ENCODE measurements at regions of chr12 and their contacts with region 1.

Region 1: DNA sequence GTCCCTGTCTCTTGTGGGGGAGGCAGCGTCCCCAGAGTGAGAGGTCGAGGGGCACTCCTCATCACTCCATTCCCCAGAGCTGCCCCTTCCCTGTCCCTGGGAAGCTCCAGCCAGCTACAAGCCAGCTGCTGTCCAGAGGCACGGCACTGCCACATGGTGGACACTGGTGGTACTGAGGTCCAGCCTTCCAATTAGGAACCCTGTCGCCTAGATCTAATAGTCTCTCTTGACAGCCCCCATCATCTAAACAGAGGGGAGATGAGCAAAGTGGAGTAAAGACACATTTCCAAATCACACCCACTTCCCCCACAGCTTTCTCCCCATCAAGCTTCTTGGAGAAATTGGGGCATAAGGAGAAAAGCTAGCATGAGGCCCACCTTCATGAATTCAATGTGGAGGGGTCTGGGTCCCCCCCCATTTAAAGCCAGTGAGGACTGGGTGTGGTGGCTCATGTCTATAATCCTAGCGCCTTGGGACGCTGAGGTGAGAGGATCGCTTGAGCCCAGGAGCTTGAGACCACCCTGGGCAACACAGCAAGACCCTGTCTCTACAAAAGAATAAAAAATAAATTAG is 2.1 kb upstream of the INHBE start:
- DNase-seq: peak; percentile 45
- ATAC-seq: peak; percentile 71
- H3K4me3 Mint-ChIP-seq: no peak overlapping the region
- H3K27ac Mint-ChIP-seq: no peak overlapping the region
- H3K4me1 Mint-ChIP-seq: peaks cover 12% of the 10 kb centered on the region
- H3K27me3 Mint-ChIP-seq: no peaks in the 10 kb centered on the region
- CTCF ChIP-seq: no peak

Region 2: GRCh38 chr12:57261428-57261865 is 191.6 kb before region 1 on chr12:
- CTCF ChIA-PET with region 1: interaction called, 67 read pairs
- POLR2A ChIA-PET with region 1: interaction called, 5 read pairs
- intact Hi-C with region 1: loop called (anchors 1 kb)
- DNase-seq: no peak
- ATAC-seq: no peak
- H3K4me3 Mint-ChIP-seq: no peak overlapping the region
- H3K27ac Mint-ChIP-seq: no peak overlapping the region
- H3K4me1 Mint-ChIP-seq: peaks cover 5% of the 10 kb centered on the region
- H3K27me3 Mint-ChIP-seq: no peaks in the 10 kb centered on the region
- CTCF ChIP-seq: no peak

Region 3: DNA sequence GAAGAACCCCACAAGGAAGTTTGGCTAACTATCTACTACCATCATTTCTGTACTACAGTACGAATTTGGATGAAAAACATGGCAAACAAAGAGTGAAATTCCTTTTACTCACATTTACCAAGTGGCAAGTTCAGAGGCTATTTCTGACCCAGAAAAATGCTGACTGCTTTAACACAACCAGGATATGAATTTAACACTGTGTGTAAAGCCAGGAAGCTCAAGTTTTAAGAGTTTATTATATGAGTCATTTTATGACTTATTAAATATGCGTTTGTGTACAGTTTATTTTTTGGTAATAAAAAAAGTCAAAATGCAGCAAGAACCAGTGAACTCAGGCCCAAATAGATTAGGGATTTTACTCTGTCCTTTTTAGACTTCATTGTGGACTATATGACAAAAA is 143.6 kb before region 1 on chr12:
- CTCF ChIA-PET with region 1: interaction called, 58 read pairs
- POLR2A ChIA-PET with region 1: no interaction called
- intact Hi-C with region 1: loop called (anchors 1 kb)
- DNase-seq: no peak
- ATAC-seq: no peak
- H3K4me3 Mint-ChIP-seq: no peak overlapping the region
- H3K27ac Mint-ChIP-seq: no peak overlapping the region
- H3K4me1 Mint-ChIP-seq: no peaks in the 10 kb centered on the region
- H3K27me3 Mint-ChIP-seq: no peaks in the 10 kb centered on the region
- CTCF ChIP-seq: no peak

Region 4: DNA sequence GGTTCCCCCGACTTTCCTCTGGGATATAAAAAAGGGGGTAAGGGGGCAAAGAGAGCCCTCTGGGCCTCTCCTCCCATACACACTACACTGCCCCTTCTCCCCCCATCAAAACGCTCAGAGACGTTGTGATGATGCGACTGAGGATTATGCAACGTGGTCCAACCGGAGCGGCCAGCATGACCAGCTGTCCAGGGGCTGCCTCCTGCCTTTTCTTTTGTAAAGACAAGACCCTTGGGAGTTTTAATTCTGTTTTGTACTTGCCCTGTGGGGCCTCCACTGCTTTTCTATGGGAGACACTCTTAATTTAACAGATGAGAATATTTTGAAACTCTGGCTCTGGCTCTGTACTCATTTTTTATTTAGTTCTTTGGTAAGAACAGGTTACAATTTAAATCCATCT is 76.8 kb after region 1 on chr12:
- CTCF ChIA-PET with region 1: no interaction called
- POLR2A ChIA-PET with region 1: interaction called, 12 read pairs
- intact Hi-C with region 1: no loop called
- DNase-seq: no peak
- ATAC-seq: no peak
- H3K4me3 Mint-ChIP-seq: no peak overlapping the region
- H3K27ac Mint-ChIP-seq: no peak overlapping the region
- H3K4me1 Mint-ChIP-seq: peaks cover 3% of the 10 kb centered on the region
- H3K27me3 Mint-ChIP-seq: no peaks in the 10 kb centered on the region
- CTCF ChIP-seq: no peak